A549 (cell line): ENCODE measurements at regions of chr1 and their contacts with region 1.

Region 1: DNA sequence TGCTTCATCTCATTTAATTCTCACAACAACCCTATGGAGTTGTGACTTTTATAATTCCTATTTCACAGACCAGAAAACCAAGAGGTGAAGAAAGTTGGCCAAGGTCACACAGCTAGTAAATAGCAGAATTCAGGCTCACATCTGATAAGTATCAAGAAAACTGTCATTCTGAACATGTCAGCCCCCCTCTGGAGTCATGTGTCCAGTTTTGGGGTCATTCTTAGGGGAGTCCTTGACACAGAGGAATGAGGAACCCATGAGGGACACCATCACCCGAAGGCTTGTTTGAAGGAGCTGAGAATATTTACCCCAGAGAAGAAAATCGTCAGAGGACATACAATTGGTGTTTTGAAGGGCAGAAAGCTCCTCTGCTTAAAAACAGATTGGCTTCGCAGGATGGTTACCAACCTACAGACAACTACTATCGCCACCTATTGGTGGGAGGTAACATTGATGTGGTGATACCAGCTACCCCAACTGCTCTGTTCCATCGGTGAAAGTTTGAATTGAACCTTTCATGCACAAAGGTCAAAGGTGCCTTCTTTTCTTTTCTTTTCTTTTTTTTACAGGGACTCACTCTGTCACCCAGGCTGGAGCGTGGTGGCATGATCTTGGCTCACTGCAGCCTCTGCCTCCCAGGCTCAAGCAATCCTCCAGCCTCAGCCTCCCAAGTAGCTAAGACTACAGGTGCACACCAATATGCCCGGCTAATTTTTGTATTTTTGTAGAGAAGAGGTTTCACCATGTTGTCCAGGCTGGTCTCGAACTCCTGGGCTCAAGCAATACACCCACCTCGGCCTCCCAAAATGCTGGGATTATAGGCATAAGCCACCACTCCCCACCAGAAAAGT is 31.3 kb downstream of the NCMAP start:
- DNase-seq: peak; percentile 49 to 66
- ATAC-seq: peak; percentile 82 to 96; a peak in 5 of 6 replicates
- H3K4me3 ChIP-seq: no peak overlapping the region
- H3K27ac ChIP-seq: peak overlapping the region in 1 of 2 experiments; percentile 30; a peak in 1 of 6 replicates
- H3K4me1 ChIP-seq: no peaks in the 10 kb centered on the region
- CTCF ChIP-seq: peak; percentile 62
- EP300 ChIP-seq: no peak
- POLR2A ChIP-seq: no peak
- RAD21 ChIP-seq: peak; percentile 66 to 68

Region 2: DNA sequence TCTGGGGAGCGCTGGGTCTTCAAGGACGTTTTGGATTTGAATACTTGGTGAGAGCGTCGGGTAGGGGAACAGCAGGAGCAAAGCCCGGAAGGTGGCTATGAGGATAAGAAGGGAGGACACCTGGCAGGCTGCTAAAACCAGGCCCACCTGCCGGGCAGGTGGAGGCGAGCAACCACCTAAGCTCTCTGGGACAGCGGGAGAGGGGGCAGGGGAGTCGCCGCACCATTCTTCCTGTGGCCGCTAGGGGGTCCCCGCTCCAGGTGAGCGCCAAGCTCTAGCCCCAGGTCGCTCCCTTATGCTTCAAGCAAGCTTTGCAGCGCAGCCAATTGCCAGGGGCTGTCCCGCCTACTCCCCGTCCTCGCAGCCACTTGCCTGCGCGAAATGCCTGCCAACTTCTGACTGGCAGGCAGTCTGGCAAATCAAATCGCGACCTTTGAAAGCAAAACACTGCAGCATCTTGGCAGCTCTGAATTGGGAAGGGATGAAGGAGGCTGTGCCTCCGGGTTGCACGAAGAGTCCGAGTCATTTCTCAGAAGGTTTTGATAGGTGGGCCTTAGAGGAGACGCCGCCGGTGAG is 171.8 kb before region 1 on chr1 and contains the start of gene NIPAL3:
- CTCF ChIA-PET with region 1: interaction called, 13 read pairs
- POLR2A ChIA-PET with region 1: no interaction called
- DNase-seq: peak; percentile 85 to 99
- ATAC-seq: peak; percentile 91 to 94
- H3K4me3 ChIP-seq: peak within 1 kb of the TSS; percentile 67
- H3K27ac ChIP-seq: peak within 1 kb of the TSS; percentile 64 to 95
- H3K4me1 ChIP-seq: peaks cover 51% of the 10 kb centered on the region
- CTCF ChIP-seq: peak; percentile 65
- EP300 ChIP-seq: no peak
- POLR2A ChIP-seq: no peak
- RAD21 ChIP-seq: peak; percentile 48 to 61
- polyA plus RNA-seq, gene NIPAL3: 10.4 and 14.7 TPM in 2 replicates

Region 3: DNA sequence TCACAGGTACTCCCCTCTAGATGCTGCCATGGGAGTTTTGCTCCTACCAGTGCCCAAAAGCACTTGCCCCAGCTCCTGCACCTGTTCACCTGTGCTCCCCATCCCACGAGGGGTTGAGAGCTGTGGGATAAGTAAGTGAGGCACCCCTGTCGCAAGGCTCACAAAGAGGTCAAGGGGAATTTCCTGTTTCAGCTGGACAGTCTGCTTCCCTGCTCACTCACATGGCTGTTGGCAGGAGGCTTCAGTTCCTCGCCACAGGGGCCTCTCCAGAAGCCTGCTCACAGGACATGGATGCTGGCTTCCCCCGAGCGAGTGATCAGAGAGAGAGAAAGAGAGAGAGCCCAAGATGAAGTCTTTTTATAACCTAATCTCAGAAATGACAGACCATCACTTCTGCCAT is 40.0 kb before region 1 on chr1:
- CTCF ChIA-PET with region 1: interaction called, 10 read pairs
- POLR2A ChIA-PET with region 1: no interaction called
- DNase-seq: no peak
- ATAC-seq: no peak
- H3K4me3 ChIP-seq: no peak overlapping the region
- H3K27ac ChIP-seq: no peak overlapping the region; a peak in 1 of 6 replicates
- H3K4me1 ChIP-seq: peaks cover 28% of the 10 kb centered on the region
- CTCF ChIP-seq: no peak
- EP300 ChIP-seq: no peak
- POLR2A ChIP-seq: no peak
- RAD21 ChIP-seq: no peak

Region 4: DNA sequence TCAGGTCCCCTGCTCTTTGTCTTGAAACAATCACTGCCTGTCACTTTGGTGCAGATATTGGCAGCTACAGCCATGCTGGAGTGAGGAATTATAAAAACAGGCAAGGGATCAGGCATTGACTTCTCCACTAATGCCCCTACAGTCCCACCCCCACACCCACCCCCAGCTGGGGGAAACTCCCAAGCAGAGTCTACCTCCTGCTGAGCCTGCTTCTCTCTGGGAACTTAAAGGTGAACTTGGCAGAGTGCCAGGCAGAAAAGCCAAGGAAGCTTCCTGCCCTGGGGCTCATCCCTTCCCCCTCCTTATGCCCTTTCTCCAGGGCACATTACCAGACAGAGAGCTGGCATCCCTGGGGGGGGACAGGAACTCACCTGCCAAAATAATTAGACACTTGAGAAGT is 24.6 kb before region 1 on chr1:
- CTCF ChIA-PET with region 1: interaction called, 14 read pairs
- POLR2A ChIA-PET with region 1: no interaction called
- DNase-seq: peak in 1 of 2 experiments; percentile 30
- ATAC-seq: no peak
- H3K4me3 ChIP-seq: no peak overlapping the region
- H3K27ac ChIP-seq: peak overlapping the region; percentile 44 to 84; a peak in 5 of 6 replicates
- H3K4me1 ChIP-seq: peaks cover 74% of the 10 kb centered on the region
- CTCF ChIP-seq: no peak
- EP300 ChIP-seq: 0 out of 5 replicates have a peak, but pooled peaks of 1 of the 2 experiments have one; percentile 34
- POLR2A ChIP-seq: no peak
- RAD21 ChIP-seq: no peak

Region 5: DNA sequence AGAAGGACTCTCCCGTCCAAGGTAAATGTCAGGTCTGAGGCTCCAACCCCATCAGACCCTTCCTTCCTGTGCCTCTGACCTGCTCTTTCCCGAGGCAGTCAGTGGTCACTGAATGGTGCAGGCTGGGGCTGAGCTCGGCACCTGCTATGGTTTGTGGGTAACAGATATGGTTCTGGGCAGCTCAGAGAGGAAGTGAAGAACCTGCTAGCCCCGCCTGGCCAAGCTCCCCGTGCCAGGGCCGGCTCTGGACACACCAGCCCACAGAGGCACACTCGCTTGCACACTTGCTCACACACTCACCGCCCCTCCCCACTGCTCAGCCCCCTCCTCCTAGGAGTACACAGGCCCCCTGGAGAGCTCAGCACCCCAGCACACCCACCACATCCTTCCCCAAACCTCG is 14.9 kb before region 1 on chr1:
- CTCF ChIA-PET with region 1: interaction called, 17 read pairs
- POLR2A ChIA-PET with region 1: no interaction called
- DNase-seq: no peak
- ATAC-seq: no peak
- H3K4me3 ChIP-seq: no peak overlapping the region
- H3K27ac ChIP-seq: no peak overlapping the region
- H3K4me1 ChIP-seq: peaks cover 15% of the 10 kb centered on the region
- CTCF ChIP-seq: no peak
- EP300 ChIP-seq: no peak
- POLR2A ChIP-seq: no peak
- RAD21 ChIP-seq: no peak

Region 6: GRCh38 chr1:24841593-24841992 is 254.4 kb after region 1 on chr1:
- CTCF ChIA-PET with region 1: no interaction called
- POLR2A ChIA-PET with region 1: no interaction called
- DNase-seq: no peak
- ATAC-seq: no peak
- H3K4me3 ChIP-seq: no peak overlapping the region
- H3K27ac ChIP-seq: no peak overlapping the region
- H3K4me1 ChIP-seq: no peaks in the 10 kb centered on the region
- CTCF ChIP-seq: no peak
- EP300 ChIP-seq: no peak
- POLR2A ChIP-seq: no peak
- RAD21 ChIP-seq: no peak